Activated CD4-positive, alpha-beta T cell treated with anti-CD3 and anti-CD28 coated beads for 36 hours (primary cell): ENCODE measurements at regions of chr16 and their contacts with region 1.

Region 1: DNA sequence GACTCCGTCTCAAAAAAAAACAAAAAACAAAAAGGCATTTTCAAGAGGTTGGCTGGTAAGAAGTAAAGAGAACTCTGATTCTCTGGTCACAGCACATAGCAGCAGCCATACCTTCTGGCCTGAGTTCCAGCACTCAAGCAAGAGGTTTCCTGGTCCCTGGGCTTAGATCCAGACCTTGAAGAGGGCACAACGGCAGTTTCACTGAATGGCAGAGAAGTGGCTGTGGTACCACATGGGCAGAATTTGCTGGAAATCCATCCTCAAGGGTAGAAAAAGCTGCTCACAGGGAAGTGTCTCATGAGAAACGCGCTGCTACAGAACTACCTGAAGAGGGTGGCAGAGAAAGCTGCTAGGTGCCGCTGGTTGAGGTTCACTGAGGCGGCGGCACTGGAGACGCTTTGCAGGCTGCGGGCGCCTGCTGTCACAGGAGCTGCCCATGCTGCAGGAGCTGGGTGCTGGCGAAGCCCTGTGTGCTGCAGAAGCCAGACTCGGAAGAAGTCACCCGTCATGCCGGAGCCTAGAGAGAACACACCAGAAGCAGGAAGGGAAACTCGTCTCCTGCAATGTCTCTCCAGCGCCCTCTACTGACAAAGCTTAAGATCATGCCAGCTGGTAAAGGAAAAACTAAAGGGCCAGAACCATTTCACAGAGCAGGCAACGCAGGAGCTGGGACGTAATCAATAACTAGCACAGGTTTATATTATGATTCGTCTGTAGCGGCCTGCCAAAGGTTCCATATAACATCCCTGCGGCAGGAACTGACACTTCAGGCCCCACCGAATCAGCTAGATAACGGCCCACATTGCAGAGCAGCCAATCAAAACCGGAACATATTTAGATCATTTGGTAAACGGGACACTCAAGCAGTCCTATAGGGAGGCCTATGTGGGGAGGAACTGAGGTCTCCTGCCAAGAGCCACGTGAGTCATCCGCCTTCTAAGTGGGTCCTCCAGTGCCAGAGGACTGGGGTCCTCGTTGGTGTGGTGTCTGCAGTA is 5.4 kb upstream of the ZNF213 start:
- DNase-seq: peak; percentile 85
- ATAC-seq: peak; percentile 78
- H3K4me3 Mint-ChIP-seq: peak overlapping the region; percentile 84
- H3K27ac Mint-ChIP-seq: peak overlapping the region; percentile 90
- H3K4me1 Mint-ChIP-seq: peaks cover 52% of the 10 kb centered on the region
- H3K27me3 Mint-ChIP-seq: no peaks in the 10 kb centered on the region

Region 2: DNA sequence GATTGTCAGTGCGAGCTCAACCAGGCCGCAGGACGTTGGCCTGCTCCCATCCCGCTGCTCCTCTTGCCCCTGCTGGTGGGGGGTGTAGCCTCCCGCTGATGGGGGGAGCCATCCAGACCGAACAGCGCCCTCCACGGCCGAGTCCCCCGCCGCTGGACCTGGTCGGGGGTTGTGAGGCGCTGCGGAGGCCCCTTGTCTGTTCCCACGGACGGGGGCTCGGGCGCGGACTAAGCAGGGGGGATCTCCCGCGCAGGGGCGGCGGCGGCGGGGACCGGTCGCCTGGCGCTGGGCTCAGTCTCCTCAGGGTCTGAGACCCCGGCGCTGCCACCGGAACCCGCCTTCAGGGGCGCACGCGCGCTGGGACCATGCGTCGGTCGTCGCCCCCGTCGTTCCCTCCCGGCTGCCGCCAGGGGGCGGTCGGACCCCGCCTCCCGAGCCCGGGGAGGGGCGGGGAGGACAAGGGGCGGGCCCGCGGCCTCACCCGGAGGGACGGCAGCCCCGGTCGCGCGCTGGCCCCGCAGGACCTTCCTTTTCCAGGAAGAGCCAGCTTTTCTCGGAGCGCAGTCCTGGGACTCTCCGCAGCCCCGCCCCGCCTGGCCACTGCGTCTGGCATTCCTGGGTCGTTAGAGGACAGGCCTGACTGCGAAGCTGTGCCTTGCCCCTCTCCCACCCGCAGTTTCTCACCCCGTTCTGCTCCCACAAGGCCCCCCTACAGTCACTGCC is 70.3 kb before region 1 on chr16:
- CTCF ChIA-PET with region 1: interaction called, 83 read pairs
- POLR2A ChIA-PET with region 1: interaction called, 3 read pairs
- intact Hi-C with region 1: loop called (anchors 1 kb)
- DNase-seq: peak; percentile 93
- ATAC-seq: peak; percentile 83
- H3K4me3 Mint-ChIP-seq: peak overlapping the region; percentile 84
- H3K27ac Mint-ChIP-seq: peak overlapping the region; percentile 93
- H3K4me1 Mint-ChIP-seq: peaks cover 62% of the 10 kb centered on the region
- H3K27me3 Mint-ChIP-seq: no peaks in the 10 kb centered on the region

Region 3: DNA sequence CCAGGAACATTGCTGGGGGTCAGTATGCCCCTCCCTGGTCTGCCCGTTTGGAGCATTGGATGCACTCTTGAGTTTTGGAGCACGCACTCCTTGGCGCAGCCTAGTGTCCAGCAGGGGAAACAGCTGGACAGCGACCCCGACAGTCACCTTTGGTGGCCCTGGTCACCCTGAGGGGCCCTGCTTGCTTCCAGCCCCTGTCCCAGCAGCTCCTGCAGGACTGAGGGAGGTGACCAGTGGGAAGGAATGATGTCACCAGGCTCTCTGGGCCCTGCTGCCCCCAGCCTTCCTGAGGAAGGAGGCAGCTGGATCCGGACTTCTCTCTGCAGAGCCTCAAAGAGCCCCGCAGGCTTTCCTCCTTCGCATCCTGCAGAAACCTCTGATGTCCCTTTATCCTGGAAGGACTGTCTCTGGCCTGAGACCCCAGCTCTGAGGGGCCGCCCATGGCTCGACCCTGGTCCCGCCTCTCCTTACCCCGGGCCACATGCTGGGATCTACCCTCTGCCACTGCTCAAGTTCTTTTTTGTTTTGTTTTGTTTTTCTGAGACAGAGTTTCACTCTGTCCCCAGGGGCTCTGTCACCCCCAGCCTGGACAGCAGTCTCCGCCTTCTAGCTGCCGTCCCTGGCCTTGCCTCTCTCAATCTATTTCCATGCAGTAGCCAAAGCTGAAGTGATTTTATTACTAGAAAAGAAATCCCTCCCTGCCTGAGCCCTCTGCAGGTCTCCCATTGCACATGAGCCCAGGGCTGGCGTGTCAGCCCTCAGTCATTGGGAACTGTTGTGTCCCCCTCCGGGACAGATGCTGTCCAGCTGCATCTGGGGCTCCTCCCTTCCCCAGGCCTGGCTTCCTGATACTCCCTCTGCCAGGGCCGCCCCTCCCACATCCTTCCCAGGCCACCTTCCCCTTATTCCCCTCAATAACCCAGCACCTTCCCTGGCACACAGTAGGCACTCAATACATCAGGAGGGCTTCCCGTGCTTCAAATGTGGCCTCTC is 41.9 kb before region 1 on chr16:
- CTCF ChIA-PET with region 1: interaction called, 19 read pairs
- POLR2A ChIA-PET with region 1: no interaction called
- intact Hi-C with region 1: no loop called
- DNase-seq: peak; percentile 36
- ATAC-seq: peak; percentile 62
- H3K4me3 Mint-ChIP-seq: peak overlapping the region; percentile 64
- H3K27ac Mint-ChIP-seq: peak overlapping the region; percentile 73
- H3K4me1 Mint-ChIP-seq: peaks cover 55% of the 10 kb centered on the region
- H3K27me3 Mint-ChIP-seq: no peaks in the 10 kb centered on the region

Region 4: DNA sequence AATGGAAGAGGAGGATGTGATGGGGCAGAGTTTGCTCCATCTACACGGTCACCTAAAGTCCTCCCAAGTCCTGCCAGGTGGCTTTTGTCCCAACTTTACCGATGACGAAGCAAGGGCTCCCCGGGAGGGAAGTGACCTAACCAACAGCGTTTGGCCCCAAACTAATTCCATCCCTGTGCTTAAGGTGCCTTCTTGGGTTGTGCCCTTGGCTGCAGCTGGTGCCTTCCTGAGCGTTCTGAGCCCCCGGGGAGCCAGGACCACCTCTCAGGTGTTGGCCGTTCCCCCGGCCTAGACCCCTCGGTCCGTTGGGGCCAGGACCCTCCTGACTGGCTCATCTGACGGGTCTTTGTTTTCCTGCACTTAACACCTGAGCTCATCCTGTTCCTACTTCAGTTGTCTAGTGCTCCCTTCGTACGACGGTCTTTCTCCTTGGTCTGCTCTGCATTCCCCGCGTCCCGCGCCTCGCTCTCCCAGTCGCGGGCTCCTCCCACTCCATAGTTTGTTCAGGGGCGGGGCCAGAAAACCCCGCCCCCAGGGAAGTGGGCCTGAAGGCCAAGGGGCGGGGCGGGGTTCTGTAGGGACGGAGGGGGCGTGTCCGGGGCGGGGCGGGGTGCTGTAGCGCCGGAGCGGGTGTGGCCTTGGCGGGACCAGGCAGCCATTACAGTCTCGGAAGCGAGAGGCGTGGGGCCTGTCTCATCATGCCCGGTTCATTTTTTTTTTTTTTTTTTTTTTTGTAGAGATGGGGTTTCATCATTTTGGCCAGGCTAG is 29.5 kb before region 1 on chr16:
- CTCF ChIA-PET with region 1: interaction called, 125 read pairs
- POLR2A ChIA-PET with region 1: no interaction called
- intact Hi-C with region 1: loop called (anchors 1 kb)
- DNase-seq: peak; percentile 99
- ATAC-seq: peak; percentile 84
- H3K4me3 Mint-ChIP-seq: peak overlapping the region; percentile 68
- H3K27ac Mint-ChIP-seq: peak overlapping the region; percentile 84
- H3K4me1 Mint-ChIP-seq: peaks cover 49% of the 10 kb centered on the region
- H3K27me3 Mint-ChIP-seq: no peaks in the 10 kb centered on the region

Region 5: GRCh38 chr16:3112058-3112880 is 17.2 kb before region 1 on chr16 and contains the start of gene ZNF205:
- CTCF ChIA-PET with region 1: interaction called, 34 read pairs
- POLR2A ChIA-PET with region 1: no interaction called
- intact Hi-C with region 1: no loop called
- DNase-seq: no peak
- ATAC-seq: no peak
- H3K4me3 Mint-ChIP-seq: no peak within 1 kb of the TSS
- H3K27ac Mint-ChIP-seq: no peak within 1 kb of the TSS
- H3K4me1 Mint-ChIP-seq: peaks cover 2% of the 10 kb centered on the region
- H3K27me3 Mint-ChIP-seq: peaks cover 5% of the 10 kb centered on the region
- total RNA-seq, gene ZNF205: 0.21 to 0.32 TPM

Region 6: DNA sequence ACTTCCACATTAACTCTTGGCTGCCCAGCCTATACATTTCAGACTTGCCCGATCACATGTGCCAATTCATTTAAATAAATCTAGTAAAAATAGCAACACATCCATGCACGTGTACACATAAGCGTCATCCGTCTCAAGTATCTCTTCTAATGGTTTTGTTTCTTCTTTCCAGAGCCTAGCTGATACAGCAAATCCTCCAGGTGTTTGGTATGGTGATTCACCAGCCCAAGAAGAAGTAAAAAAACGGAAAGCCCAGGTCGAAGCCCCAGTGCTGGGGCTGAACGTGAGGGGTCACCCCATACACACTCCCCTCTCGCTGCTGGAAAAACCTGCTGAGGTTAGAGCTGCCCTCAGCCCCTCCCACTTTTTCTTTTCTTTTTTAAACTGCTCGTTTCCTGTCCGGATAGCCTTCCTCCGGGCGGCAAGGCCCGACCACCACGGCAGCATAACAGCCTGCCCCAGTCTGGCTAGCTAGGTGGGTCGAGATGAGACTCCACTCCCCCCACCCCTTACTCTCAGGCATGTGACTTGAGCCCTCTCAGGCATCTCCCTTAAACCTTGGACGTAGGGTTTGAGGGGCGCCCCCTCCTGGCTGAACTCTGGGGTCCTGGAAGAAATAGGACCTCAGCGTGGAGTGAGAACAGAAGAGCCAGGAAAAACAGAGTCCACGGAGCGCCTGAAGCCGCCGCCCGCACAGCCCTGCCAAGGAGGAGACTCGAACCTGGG is 44.6 kb after region 1 on chr16:
- CTCF ChIA-PET with region 1: interaction called, 27 read pairs
- POLR2A ChIA-PET with region 1: no interaction called
- intact Hi-C with region 1: no loop called
- DNase-seq: peak; percentile 61
- ATAC-seq: peak; percentile 10
- H3K4me3 Mint-ChIP-seq: peak overlapping the region; percentile 47
- H3K27ac Mint-ChIP-seq: peak overlapping the region; percentile 26
- H3K4me1 Mint-ChIP-seq: peaks cover 37% of the 10 kb centered on the region
- H3K27me3 Mint-ChIP-seq: peaks cover 51% of the 10 kb centered on the region